SK-N-SH (cell line): ENCODE measurements at regions of chr11 and their contacts with region 1.

Region 1: DNA sequence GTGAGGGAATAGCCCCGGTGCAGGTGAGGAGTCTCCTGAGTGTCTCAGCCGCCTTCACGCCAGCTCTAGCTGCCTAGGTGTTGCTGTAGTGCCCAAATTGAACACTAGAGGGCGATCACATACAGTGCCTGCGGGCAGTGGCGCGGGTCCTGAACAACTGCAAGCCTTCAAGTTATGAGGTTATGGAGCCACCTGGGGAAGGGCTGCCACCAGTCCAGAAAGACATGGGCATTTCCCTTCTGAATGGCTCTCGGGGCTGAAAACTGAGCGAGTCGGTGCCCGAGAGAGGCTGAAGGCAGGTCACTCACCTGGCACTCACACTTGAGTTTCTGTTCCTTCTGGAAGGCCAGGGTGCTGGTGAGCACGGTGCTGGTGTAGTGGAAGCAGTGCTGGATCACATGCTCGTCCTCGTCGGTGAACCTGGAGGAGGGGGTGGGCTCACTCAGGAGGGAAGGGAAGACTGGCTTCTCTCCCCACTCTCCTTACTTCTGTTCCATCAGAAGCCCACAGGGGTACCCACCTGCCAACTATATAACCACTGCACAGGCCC is 88.4 kb downstream of the PDE2A start:
- DNase-seq: peak; percentile 89
- H3K4me3 ChIP-seq: no peak overlapping the region
- H3K27ac ChIP-seq: no peak overlapping the region
- H3K4me1 ChIP-seq: no peaks in the 10 kb centered on the region; a peak in 1 of 4 replicates
- H3K27me3 ChIP-seq: peaks cover 20% of the 10 kb centered on the region
- CTCF ChIP-seq: peak; percentile 90
- EP300 ChIP-seq: no peak
- RAD21 ChIP-seq: peak; percentile 87

Region 2: DNA sequence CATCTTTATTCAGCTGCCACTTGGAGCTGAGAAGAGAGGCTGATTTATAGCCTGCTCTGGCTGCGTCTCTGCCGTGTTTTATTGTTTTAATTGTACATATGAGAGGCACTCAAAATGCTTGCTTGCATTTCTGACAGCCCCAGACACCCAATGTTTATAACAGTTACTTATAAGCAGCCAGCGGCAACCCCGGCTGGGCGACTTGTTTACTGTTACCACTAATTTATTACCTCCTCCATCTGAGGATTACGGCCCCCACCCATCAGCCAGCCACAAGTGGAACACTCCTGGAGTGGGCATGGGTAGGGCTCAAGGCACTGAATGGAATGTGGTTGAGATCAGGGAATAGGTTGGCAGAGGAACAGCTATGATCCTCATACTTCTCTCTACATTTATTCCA is 212.7 kb before region 1 on chr11:
- CTCF ChIA-PET with region 1: no interaction called
- POLR2A ChIA-PET with region 1: no interaction called
- DNase-seq: no peak
- H3K4me3 ChIP-seq: no peak overlapping the region
- H3K27ac ChIP-seq: peak overlapping the region in 1 of 2 experiments; percentile 99; a peak in 2 of 4 replicates
- H3K4me1 ChIP-seq: peaks cover 20 to 44% of the 10 kb centered on the region in 2 experiments
- H3K27me3 ChIP-seq: no peaks in the 10 kb centered on the region
- CTCF ChIP-seq: no peak
- EP300 ChIP-seq: 0 out of 4 replicates have a peak, but pooled peaks of 1 of the 2 experiments have one; percentile 13
- RAD21 ChIP-seq: no peak

Region 3: DNA sequence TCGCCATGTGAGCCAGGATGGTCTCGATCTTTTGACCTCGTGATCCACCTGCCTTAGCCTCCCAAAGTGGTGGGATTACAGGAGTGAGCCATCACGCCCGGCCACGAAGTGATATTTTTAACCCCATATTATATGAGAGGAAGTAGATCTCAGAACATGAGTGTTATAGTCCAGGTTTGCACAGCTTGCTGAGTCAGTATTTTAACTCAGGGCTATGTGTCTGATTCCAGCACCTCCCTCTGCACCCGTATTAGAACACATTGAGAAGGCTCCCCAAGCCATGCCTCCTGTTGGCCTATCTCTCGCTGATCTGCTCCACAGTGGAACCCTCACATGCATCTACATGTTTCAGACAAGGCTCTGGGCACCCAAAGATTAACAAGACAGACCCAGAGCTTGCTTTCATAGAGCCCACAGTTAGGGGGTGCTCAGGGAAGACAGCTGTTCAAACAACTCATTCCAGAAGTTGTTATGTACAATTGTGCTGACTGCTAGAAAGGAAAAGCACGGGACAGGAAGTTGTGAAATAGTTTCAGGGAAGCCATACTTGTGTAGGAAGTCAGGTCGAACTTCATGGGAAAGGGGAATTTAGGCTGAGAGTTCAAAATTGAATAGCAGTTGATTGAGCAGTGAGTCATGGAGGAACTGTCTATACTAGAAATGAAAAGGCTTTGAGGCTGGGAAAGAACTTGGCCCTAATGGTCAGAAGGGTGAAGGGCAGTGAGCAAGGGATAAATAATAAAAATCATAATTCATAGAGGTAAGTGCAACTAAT is 102.2 kb before region 1 on chr11:
- CTCF ChIA-PET with region 1: interaction called, 12 read pairs
- POLR2A ChIA-PET with region 1: no interaction called
- DNase-seq: no peak
- H3K4me3 ChIP-seq: no peak overlapping the region
- H3K27ac ChIP-seq: no peak overlapping the region
- H3K4me1 ChIP-seq: no peaks in the 10 kb centered on the region; a peak in 1 of 4 replicates
- H3K27me3 ChIP-seq: no peaks in the 10 kb centered on the region; the same call in 1 of the 2 replicates
- CTCF ChIP-seq: no peak
- EP300 ChIP-seq: no peak
- RAD21 ChIP-seq: no peak

Region 4: GRCh38 chr11:72631806-72632731 is 46.2 kb after region 1 on chr11:
- CTCF ChIA-PET with region 1: interaction called, 39 read pairs
- POLR2A ChIA-PET with region 1: no interaction called
- DNase-seq: peak; percentile 80
- H3K4me3 ChIP-seq: no peak overlapping the region
- H3K27ac ChIP-seq: peak overlapping the region in 1 of 2 experiments; percentile 88; a peak in 2 of 4 replicates
- H3K4me1 ChIP-seq: peaks cover 0 to 94% of the 10 kb centered on the region in 2 experiments; a peak in 2 of 4 replicates
- H3K27me3 ChIP-seq: no peaks in the 10 kb centered on the region; the same call in 1 of the 2 replicates
- CTCF ChIP-seq: no peak
- EP300 ChIP-seq: peak in 1 of 2 experiments; percentile 56; a peak in 1 of 4 replicates
- RAD21 ChIP-seq: peak; percentile 3; the same call in 1 of the 2 replicates